B cell (primary cell): ENCODE measurements at regions of chr17 and their contacts with region 1.

Region 1: GRCh38 chr17:47323382-47324222 is at the start of gene EFCAB13:
- DNase-seq: peak; percentile 95
- ATAC-seq: peak; percentile 81
- H3K4me3 ChIP-seq: peak within 1 kb of the TSS; percentile 74 to 99 (median 91)
- H3K4me3 Mint-ChIP-seq: peak within 1 kb of the TSS; percentile 100
- H3K27ac ChIP-seq: peak within 1 kb of the TSS; percentile 97 to 99
- H3K27ac Mint-ChIP-seq: peak within 1 kb of the TSS; percentile 99
- H3K4me1 ChIP-seq: peaks cover 11 to 15% of the 10 kb centered on the region in 2 donors
- H3K4me1 Mint-ChIP-seq: peaks cover 25% of the 10 kb centered on the region
- H3K27me3 ChIP-seq: no peaks in the 10 kb centered on the region
- H3K27me3 Mint-ChIP-seq: no peaks in the 10 kb centered on the region
- CTCF ChIP-seq: peak; percentile 45
- total RNA-seq, gene EFCAB13: 86.5 and 88.4 TPM in 2 replicates

Region 2: GRCh38 chr17:46193626-46194392 is 1129.8 kb before region 1 on chr17:
- CTCF ChIA-PET with region 1: no interaction called
- POLR2A ChIA-PET with region 1: no interaction called
- intact Hi-C with region 1: loop called (anchors 10 kb)
- DNase-seq: peak; percentile 92
- ATAC-seq: peak; percentile 66
- H3K4me3 ChIP-seq: peak overlapping the region; percentile 79 to 95 (median 83)
- H3K4me3 Mint-ChIP-seq: peak overlapping the region; percentile 78
- H3K27ac ChIP-seq: peak overlapping the region; percentile 91 to 97
- H3K27ac Mint-ChIP-seq: peak overlapping the region; percentile 86
- H3K4me1 ChIP-seq: peaks cover 29 to 37% of the 10 kb centered on the region in 2 donors
- H3K4me1 Mint-ChIP-seq: peaks cover 47% of the 10 kb centered on the region
- H3K27me3 ChIP-seq: no peaks in the 10 kb centered on the region
- H3K27me3 Mint-ChIP-seq: no peaks in the 10 kb centered on the region
- CTCF ChIP-seq: no peak

Region 3: DNA sequence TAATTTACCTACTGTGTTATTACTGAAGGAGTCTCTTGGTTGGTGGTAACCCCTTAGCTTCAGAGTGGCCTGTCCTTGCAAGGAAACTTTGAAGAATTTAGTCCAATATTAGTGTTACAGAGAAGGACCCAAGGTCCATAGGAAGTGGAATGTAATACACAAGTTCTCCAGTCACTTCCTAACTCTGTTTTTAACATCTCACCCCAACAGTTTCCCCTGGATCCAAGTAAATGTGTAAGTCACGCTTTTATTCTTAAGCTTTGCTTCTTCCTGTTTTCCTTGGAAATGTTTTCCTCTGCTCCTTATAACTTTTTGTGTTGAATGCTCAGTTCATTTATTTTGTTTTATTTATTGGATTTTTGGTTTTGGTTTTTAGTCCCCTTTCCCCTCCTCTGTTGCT is 318.7 kb before region 1 on chr17:
- CTCF ChIA-PET with region 1: interaction called, 7 read pairs
- POLR2A ChIA-PET with region 1: no interaction called
- intact Hi-C with region 1: loop called (anchors 5 kb)
- DNase-seq: no peak
- ATAC-seq: no peak
- H3K4me3 ChIP-seq: no peak overlapping the region
- H3K4me3 Mint-ChIP-seq: no peak overlapping the region
- H3K27ac ChIP-seq: no peak overlapping the region
- H3K27ac Mint-ChIP-seq: no peak overlapping the region
- H3K4me1 ChIP-seq: peaks cover 7 to 14% of the 10 kb centered on the region in 2 donors
- H3K4me1 Mint-ChIP-seq: peaks cover 11% of the 10 kb centered on the region
- H3K27me3 ChIP-seq: no peaks in the 10 kb centered on the region
- H3K27me3 Mint-ChIP-seq: no peaks in the 10 kb centered on the region
- CTCF ChIP-seq: no peak

Region 4: GRCh38 chr17:47188876-47189731 is 134.5 kb before region 1 on chr17 and contains the start of gene CDC27:
- CTCF ChIA-PET with region 1: no interaction called
- POLR2A ChIA-PET with region 1: interaction called, 4 read pairs
- intact Hi-C with region 1: loop called (anchors 1 kb)
- DNase-seq: peak; percentile 100
- ATAC-seq: peak; percentile 90
- H3K4me3 ChIP-seq: peak within 1 kb of the TSS; percentile 74 to 99 (median 88)
- H3K4me3 Mint-ChIP-seq: peak within 1 kb of the TSS; percentile 96
- H3K27ac ChIP-seq: peak within 1 kb of the TSS; percentile 92 to 95
- H3K27ac Mint-ChIP-seq: peak within 1 kb of the TSS; percentile 95
- H3K4me1 ChIP-seq: peaks cover 21 to 30% of the 10 kb centered on the region in 2 donors
- H3K4me1 Mint-ChIP-seq: peaks cover 53% of the 10 kb centered on the region
- H3K27me3 ChIP-seq: no peaks in the 10 kb centered on the region
- H3K27me3 Mint-ChIP-seq: no peaks in the 10 kb centered on the region
- CTCF ChIP-seq: no peak
- total RNA-seq, gene CDC27: 86.5 and 90.7 TPM in 2 replicates

Region 5: DNA sequence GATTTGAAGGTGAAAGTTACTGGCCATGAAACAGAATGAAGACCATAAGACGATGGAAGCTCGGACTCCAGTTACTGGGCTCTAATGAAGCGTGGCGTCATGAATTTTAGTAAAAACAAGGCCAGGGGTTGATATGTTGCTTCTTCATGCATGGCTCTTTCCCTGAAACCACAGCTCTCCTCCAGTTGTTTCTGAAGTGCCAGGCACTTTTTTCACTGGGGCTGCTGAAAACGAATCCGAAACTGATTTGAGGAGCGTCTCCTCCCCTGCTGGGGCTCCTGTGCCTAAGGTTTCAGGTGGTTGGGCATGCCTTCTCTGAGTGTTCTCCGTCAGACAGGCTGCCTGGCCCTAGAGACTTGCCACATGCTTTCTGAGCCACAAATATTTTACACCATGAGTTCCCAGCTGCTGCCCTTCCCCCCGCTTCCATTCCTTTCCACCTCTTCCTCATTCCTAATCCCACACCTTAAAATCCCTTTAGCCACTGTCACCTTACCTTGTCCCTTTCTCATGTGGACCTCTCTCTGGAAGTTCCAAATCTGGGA is 118.1 kb before region 1 on chr17:
- CTCF ChIA-PET with region 1: interaction called, 4 read pairs
- POLR2A ChIA-PET with region 1: interaction called, 3 read pairs
- intact Hi-C with region 1: loop called (anchors 1 kb)
- DNase-seq: peak; percentile 87
- ATAC-seq: peak; percentile 69
- H3K4me3 ChIP-seq: peak overlapping the region; percentile 30 to 56 (median 45)
- H3K4me3 Mint-ChIP-seq: peak overlapping the region; percentile 87
- H3K27ac ChIP-seq: peak overlapping the region; percentile 96 to 97
- H3K27ac Mint-ChIP-seq: peak overlapping the region; percentile 99
- H3K4me1 ChIP-seq: peaks cover 67 to 74% of the 10 kb centered on the region in 2 donors
- H3K4me1 Mint-ChIP-seq: peaks cover 73% of the 10 kb centered on the region
- H3K27me3 ChIP-seq: no peaks in the 10 kb centered on the region
- H3K27me3 Mint-ChIP-seq: no peaks in the 10 kb centered on the region
- CTCF ChIP-seq: no peak

Region 6: GRCh38 chr17:47286198-47286914 is 37.2 kb before region 1 on chr17:
- CTCF ChIA-PET with region 1: no interaction called
- POLR2A ChIA-PET with region 1: interaction called, 15 read pairs
- intact Hi-C with region 1: loop called (anchors 1 kb)
- DNase-seq: peak; percentile 83
- ATAC-seq: peak; percentile 87
- H3K4me3 ChIP-seq: no peak overlapping the region
- H3K4me3 Mint-ChIP-seq: peak overlapping the region; percentile 72
- H3K27ac ChIP-seq: peak overlapping the region; percentile 27 to 68
- H3K27ac Mint-ChIP-seq: peak overlapping the region; percentile 89
- H3K4me1 ChIP-seq: peaks cover 29% of the 10 kb centered on the region in 2 donors
- H3K4me1 Mint-ChIP-seq: peaks cover 41% of the 10 kb centered on the region
- H3K27me3 ChIP-seq: no peaks in the 10 kb centered on the region
- H3K27me3 Mint-ChIP-seq: no peaks in the 10 kb centered on the region
- CTCF ChIP-seq: no peak

Region 7: DNA sequence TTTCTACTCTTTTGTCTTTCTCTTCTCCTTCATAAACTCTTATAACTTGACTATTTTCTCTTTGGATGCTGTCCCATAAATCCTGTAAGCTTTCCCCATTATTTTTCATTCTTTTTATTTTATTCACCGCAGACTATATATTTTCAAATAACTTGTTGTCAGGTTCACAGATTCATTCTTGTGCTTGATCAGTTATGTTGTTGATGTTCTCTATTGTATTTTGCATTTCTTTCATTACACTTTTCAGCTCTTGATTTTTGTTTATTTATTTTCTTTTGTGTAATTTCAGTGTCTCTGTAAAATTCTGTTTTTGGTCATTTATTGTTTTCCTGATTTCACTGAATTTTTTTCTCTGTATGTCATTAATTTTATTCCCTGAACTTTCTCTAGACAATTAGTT is 49.4 kb after region 1 on chr17:
- CTCF ChIA-PET with region 1: no interaction called
- POLR2A ChIA-PET with region 1: no interaction called
- intact Hi-C with region 1: no loop called
- DNase-seq: no peak
- ATAC-seq: no peak
- H3K4me3 ChIP-seq: no peak overlapping the region
- H3K4me3 Mint-ChIP-seq: no peak overlapping the region
- H3K27ac ChIP-seq: no peak overlapping the region
- H3K27ac Mint-ChIP-seq: no peak overlapping the region
- H3K4me1 ChIP-seq: no peaks in the 10 kb centered on the region
- H3K4me1 Mint-ChIP-seq: no peaks in the 10 kb centered on the region
- H3K27me3 ChIP-seq: no peaks in the 10 kb centered on the region
- H3K27me3 Mint-ChIP-seq: no peaks in the 10 kb centered on the region
- CTCF ChIP-seq: no peak